Panc1 (cell line): ENCODE measurements at regions of chr18 and their contacts with region 1.

Region 1: DNA sequence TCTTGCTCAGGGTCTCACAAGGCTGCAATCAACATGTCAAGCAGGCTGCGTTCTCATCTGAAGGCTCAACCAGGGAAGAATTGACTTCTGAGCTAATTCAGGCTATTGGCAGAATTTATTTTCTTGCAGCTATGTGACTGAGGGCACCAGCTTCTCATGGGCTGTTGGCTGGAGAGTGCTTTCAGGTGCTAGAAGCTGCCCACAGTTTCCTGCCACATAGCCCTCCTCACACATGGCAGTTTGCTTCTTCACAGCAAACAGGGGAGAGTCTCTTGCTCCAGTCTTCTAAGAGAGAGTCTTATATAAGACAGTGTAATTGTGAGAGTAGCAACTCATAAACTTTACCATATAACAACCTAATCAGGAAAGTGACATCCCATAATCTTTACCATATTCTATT is 37.5 kb upstream of the INO80C start:
- DNase-seq: no peak
- ATAC-seq: no peak
- H3K4me3 ChIP-seq: no peak overlapping the region
- H3K27ac ChIP-seq: no peak overlapping the region
- H3K4me1 ChIP-seq: no peaks in the 10 kb centered on the region
- H3K27me3 ChIP-seq: no peaks in the 10 kb centered on the region
- CTCF ChIP-seq: no peak

Region 2: GRCh38 chr18:35361570-35362321 is 173.6 kb before region 1 on chr18:
- CTCF ChIA-PET with region 1: no interaction called
- POLR2A ChIA-PET with region 1: no interaction called
- in situ Hi-C with region 1: no loop called
- intact Hi-C with region 1: no loop called
- DNase-seq: no peak
- ATAC-seq: no peak
- H3K4me3 ChIP-seq: no peak overlapping the region
- H3K27ac ChIP-seq: no peak overlapping the region
- H3K4me1 ChIP-seq: no peaks in the 10 kb centered on the region
- H3K27me3 ChIP-seq: no peaks in the 10 kb centered on the region
- CTCF ChIP-seq: no peak

Region 3: GRCh38 chr18:35497370-35498197 is 37.7 kb before region 1 on chr18 and contains the start of gene INO80C:
- CTCF ChIA-PET with region 1: no interaction called
- POLR2A ChIA-PET with region 1: no interaction called
- in situ Hi-C with region 1: no loop called
- intact Hi-C with region 1: no loop called
- DNase-seq: peak; percentile 70
- ATAC-seq: peak; percentile 96
- H3K4me3 ChIP-seq: peak within 1 kb of the TSS; percentile 62 to 74
- H3K27ac ChIP-seq: peak within 1 kb of the TSS; percentile 96
- H3K4me1 ChIP-seq: peaks cover 34% of the 10 kb centered on the region
- H3K27me3 ChIP-seq: no peaks in the 10 kb centered on the region
- CTCF ChIP-seq: no peak
- total RNA-seq, gene INO80C: 25.8 TPM

Region 4: DNA sequence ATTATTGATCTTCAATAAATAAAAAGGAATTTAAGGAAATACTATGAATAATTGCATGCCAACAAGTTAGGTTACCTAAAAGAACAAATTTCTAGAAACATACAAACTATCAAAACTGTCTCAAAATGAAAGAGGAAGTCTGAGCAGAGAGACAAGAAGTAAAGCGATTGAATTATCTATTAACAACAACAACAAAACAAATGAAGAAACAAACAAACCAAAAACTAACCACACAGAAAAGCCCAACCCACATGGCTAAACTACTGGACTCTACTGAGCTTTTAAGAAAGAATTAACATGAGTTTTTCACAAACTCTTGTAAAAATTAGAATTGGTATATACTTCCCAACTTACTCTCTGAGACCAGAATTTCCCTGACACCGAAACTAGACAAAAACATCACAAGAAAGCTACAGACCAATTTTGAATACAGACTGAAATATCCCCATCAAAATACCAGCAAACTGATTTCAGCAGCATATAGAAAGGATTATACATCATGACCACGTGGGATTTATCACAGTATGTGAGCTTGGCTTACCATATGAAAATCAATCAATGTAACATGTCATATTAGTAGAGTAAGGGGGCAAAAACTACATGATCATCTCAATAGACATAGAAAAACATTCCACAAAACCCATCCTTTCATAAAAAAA is 29.6 kb after region 1 on chr18:
- CTCF ChIA-PET with region 1: interaction called, 11 read pairs
- POLR2A ChIA-PET with region 1: no interaction called
- in situ Hi-C with region 1: no loop called
- intact Hi-C with region 1: no loop called
- DNase-seq: no peak
- ATAC-seq: no peak
- H3K4me3 ChIP-seq: no peak overlapping the region
- H3K27ac ChIP-seq: no peak overlapping the region
- H3K4me1 ChIP-seq: no peaks in the 10 kb centered on the region
- H3K27me3 ChIP-seq: no peaks in the 10 kb centered on the region
- CTCF ChIP-seq: no peak